Heart left ventricle (tissue), 16 donors: ENCODE measurements at regions of chr12 and their contacts with region 1.

Region 1: GRCh38 chr12:1939801-1940607 is 21.6 kb upstream of the CACNA2D4 start:
- DNase-seq: peak; percentile 81 to 92 (median 84)
- ATAC-seq: peak; percentile 72 to 84 (median 78)
- H3K4me3 ChIP-seq: peak overlapping the region in 2 of 12 donors; percentile 10 to 25
- H3K27ac ChIP-seq: peak overlapping the region in 2 of 12 donors; percentile 18 to 78
- H3K4me1 ChIP-seq: peaks cover 0 to 29% (median 8%) of the 10 kb centered on the region in 12 donors
- H3K27me3 ChIP-seq: no peaks in the 10 kb centered on the region
- CTCF ChIP-seq: peak in 11 of 12 donors; percentile 92 to 99 (median 97)
- POLR2A ChIP-seq: no peak

Region 2: GRCh38 chr12:1583421-1584078 is 356.5 kb before region 1 on chr12:
- intact Hi-C with region 1: no loop called
- DNase-seq: peak in 3 of 5 donors; percentile 58 to 71 (median 71)
- ATAC-seq: peak; percentile 50 to 83 (median 80)
- H3K4me3 ChIP-seq: peak overlapping the region in 9 of 12 donors; percentile 12 to 43 (median 26)
- H3K27ac ChIP-seq: no peak overlapping the region
- H3K4me1 ChIP-seq: peaks cover 0 to 39% (median 15%) of the 10 kb centered on the region in 12 donors
- H3K27me3 ChIP-seq: no peaks in the 10 kb centered on the region
- CTCF ChIP-seq: peak; percentile 73 to 96 (median 88)
- POLR2A ChIP-seq: no peak

Region 3: DNA sequence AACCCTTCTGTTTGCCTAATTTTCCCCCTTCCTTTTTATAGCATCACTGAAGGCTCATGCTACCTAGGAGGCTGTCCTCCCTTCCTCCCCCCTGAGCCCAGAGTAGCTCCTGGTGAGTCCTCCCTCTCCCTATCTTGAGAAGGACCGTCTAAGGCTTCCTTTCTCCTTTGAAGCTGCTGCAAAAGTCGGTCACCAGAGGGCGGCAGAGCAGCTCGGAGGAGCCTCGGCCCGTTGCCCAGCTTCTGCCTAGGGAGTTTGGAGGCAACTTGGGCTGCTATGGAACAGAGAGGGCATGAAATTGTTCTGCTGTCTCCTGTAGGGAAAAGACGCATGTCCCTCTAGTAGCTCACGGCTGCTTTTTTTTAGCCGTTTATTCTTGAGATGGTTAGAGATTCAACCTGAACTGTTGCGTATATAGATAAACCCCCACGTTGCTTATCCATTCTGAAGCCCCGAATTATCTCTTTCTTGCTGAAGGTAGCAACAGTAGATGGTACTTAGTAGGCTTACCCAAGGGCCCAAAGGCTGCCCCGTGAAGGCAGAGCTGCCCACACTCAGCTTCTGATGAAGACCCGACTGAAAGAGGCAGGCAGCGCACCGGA is 305.3 kb before region 1 on chr12:
- intact Hi-C with region 1: loop called in 3 of 10 experiments (anchors 1 to 5 kb)
- DNase-seq: peak; percentile 71 to 91 (median 84)
- ATAC-seq: peak; percentile 19 to 62 (median 56)
- H3K4me3 ChIP-seq: no peak overlapping the region
- H3K27ac ChIP-seq: no peak overlapping the region
- H3K4me1 ChIP-seq: peaks cover 0 to 49% (median 20%) of the 10 kb centered on the region in 12 donors
- H3K27me3 ChIP-seq: peaks cover 0 to 17% (median 0%) of the 10 kb centered on the region in 9 donors
- CTCF ChIP-seq: peak; percentile 68 to 91 (median 78)
- POLR2A ChIP-seq: no peak

Region 4: GRCh38 chr12:1644534-1645438 is 295.2 kb before region 1 on chr12:
- intact Hi-C with region 1: loop called in 2 of 10 experiments (anchors 2 to 5 kb)
- DNase-seq: peak; percentile 81 to 88 (median 83)
- ATAC-seq: peak; percentile 33 to 80 (median 58)
- H3K4me3 ChIP-seq: no peak overlapping the region
- H3K27ac ChIP-seq: peak overlapping the region in 3 of 12 donors; percentile 30 to 49 (median 48)
- H3K4me1 ChIP-seq: peaks cover 0 to 32% (median 14%) of the 10 kb centered on the region in 12 donors
- H3K27me3 ChIP-seq: no peaks in the 10 kb centered on the region
- CTCF ChIP-seq: no peak
- POLR2A ChIP-seq: no peak

Region 5: DNA sequence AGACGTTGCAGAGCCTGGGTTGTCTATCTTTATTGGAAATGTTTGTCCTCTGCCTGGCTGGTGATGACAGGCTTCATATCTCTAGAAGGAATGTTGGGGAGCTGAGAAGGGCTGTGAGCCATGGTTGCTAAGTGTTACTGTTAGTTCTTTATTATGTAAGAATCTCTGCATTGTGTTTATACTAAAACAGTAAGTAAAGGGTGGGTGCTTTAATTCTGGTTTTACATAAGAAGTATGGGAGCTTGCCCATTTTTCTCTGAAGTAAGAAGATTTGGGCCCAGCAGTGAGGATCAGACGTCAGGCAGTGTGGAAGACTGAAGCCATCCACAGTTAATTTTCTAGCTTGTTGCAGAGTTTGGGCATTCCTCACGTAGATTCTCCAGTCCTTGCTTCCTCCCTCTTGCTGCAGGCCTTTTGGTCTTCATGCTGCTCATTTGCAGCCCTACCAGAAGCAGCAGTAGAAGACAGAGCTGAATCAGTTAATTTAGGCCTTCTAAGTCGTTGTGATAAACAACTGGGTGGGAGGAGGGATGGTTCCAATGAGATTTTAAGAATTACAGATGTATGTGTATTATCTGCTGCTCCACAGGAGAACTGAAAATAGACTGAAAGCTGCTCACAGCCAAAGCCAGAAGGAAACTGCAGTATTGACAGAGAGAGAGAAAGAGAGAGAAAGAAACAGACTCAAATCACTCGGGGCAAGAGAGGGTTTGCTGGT is 289.6 kb before region 1 on chr12:
- intact Hi-C with region 1: loop called (anchors 1 to 5 kb)
- DNase-seq: peak in 1 of 5 donors; percentile 37
- ATAC-seq: peak; percentile 76 to 84 (median 80)
- H3K4me3 ChIP-seq: peak overlapping the region in 2 of 12 donors; percentile 3 to 13
- H3K27ac ChIP-seq: peak overlapping the region in 11 of 12 donors; percentile 6 to 80 (median 61)
- H3K4me1 ChIP-seq: peaks cover 0 to 37% (median 21%) of the 10 kb centered on the region in 12 donors
- H3K27me3 ChIP-seq: no peaks in the 10 kb centered on the region
- CTCF ChIP-seq: no peak
- POLR2A ChIP-seq: no peak

Region 6: GRCh38 chr12:1795785-1796514 is 144.1 kb before region 1 on chr12:
- intact Hi-C with region 1: loop called (anchors 1 to 2 kb)
- DNase-seq: peak; percentile 92 to 98 (median 96)
- ATAC-seq: peak; percentile 92 to 96 (median 94)
- H3K4me3 ChIP-seq: peak overlapping the region; percentile 47 to 79 (median 64)
- H3K27ac ChIP-seq: peak overlapping the region; percentile 49 to 95 (median 84)
- H3K4me1 ChIP-seq: peaks cover 8 to 46% (median 26%) of the 10 kb centered on the region in 12 donors
- H3K27me3 ChIP-seq: no peaks in the 10 kb centered on the region
- CTCF ChIP-seq: peak; percentile 92 to 100 (median 99)
- POLR2A ChIP-seq: peak in 1 of 2 donors; percentile 70

Region 7: DNA sequence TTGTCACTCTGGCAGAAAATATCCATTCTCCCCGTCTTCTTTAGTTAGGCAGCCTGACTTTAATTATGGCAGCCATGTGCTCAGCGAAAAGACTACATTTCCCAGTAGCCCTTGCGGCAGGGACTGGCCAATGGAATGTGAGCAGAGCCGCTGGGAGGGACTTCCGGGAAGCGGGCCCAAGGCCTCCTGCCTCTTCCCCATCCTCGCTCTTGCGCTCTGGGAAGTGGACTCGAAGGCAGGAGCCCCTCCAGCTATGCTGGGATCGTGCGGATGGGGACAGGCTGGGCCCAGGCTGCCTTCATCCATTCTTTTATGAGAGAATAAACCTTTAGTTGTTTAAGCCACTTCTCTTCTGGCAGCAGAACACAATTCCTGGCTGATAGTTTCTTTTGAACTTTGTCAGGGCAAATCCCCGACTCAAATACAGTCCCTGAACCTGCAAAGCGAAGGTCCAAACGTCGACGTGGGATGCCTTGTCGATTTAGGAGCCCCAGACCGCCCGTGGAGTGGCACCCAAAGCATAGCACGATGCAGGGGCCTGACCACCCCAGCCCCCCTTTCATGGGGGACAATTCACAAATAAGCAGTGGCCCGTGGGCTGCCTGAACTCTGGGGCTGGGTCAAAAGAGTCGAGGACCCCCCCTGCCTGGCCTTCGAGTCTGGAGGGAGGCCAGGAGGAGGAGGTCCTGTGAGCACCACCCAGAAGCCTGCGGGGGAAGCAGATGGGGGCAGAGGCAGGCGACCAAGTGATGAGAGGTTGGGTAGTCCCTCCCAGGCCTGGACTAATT is 135.3 kb before region 1 on chr12:
- intact Hi-C with region 1: loop called in 1 of 10 experiments (anchors 2 kb)
- DNase-seq: peak; percentile 91 to 94 (median 92)
- ATAC-seq: peak; percentile 80 to 91 (median 84)
- H3K4me3 ChIP-seq: no peak overlapping the region
- H3K27ac ChIP-seq: peak overlapping the region in 6 of 12 donors; percentile 43 to 73 (median 56)
- H3K4me1 ChIP-seq: peaks cover 0 to 31% (median 16%) of the 10 kb centered on the region in 12 donors
- H3K27me3 ChIP-seq: no peaks in the 10 kb centered on the region
- CTCF ChIP-seq: no peak
- POLR2A ChIP-seq: no peak

Region 8: GRCh38 chr12:1972856-1973317 is 32.9 kb after region 1 on chr12:
- intact Hi-C with region 1: no loop called
- DNase-seq: peak in 4 of 5 donors; percentile 51 to 64 (median 56)
- ATAC-seq: peak; percentile 65 to 82 (median 76)
- H3K4me3 ChIP-seq: peak overlapping the region; percentile 11 to 60 (median 52)
- H3K27ac ChIP-seq: peak overlapping the region; percentile 75 to 92 (median 86)
- H3K4me1 ChIP-seq: peaks cover 0 to 43% (median 11%) of the 10 kb centered on the region in 12 donors
- H3K27me3 ChIP-seq: no peaks in the 10 kb centered on the region
- CTCF ChIP-seq: no peak
- POLR2A ChIP-seq: no peak